Activated T-helper 1 cell treated with anti-CD3 and anti-CD28 coated beads, Interleukin-12 subunit alpha, Interleukin-12 subunit beta, Interleukin-2, Interleukin-4 antibody, amounts not matched to agents 30 ng/mL and 10 ng/mL and 1 ng/mL, durations not matched to agents 14 hours and 24 hours and 36 hours (primary cell): ENCODE measurements at regions of chr6 and their contacts with region 1.

Region 1: GRCh38 chr6:28737750-28738395 is 185.9 kb downstream of the TRIM27 start:
- DNase-seq: no peak
- H3K4me3 Mint-ChIP-seq: peak overlapping the region; percentile 12
- H3K27ac Mint-ChIP-seq: peak overlapping the region; percentile 54
- H3K4me1 Mint-ChIP-seq: peaks cover 10% of the 10 kb centered on the region
- H3K27me3 Mint-ChIP-seq: peaks cover 72% of the 10 kb centered on the region

Region 2: GRCh38 chr6:27679308-27679963 is 1058.4 kb before region 1 on chr6:
- intact Hi-C with region 1: loop called (anchors 2 kb)
- DNase-seq: no peak
- H3K4me3 Mint-ChIP-seq: peak overlapping the region; percentile 40
- H3K27ac Mint-ChIP-seq: peak overlapping the region; percentile 61
- H3K4me1 Mint-ChIP-seq: peaks cover 15% of the 10 kb centered on the region
- H3K27me3 Mint-ChIP-seq: peaks cover 74% of the 10 kb centered on the region

Region 3: DNA sequence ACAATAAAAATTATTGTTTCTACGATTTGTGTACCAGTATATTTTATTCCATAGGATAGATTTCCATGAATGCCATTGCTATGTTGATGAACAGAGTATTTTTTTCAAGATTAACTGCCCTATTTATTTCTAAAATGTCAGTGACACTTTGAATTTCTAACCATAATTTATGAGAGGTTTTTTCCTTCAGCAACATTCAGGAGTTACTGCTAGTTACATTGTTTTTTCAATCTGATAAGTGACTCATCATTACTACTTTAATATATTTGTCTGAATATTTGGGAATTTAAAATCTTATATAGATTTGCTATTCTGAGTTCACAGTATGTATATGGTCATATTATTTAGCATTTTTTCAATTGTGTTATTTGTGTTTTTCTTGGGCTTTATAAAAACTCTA is 786.8 kb before region 1 on chr6:
- intact Hi-C with region 1: no loop called
- DNase-seq: no peak
- H3K4me3 Mint-ChIP-seq: no peak overlapping the region
- H3K27ac Mint-ChIP-seq: no peak overlapping the region
- H3K4me1 Mint-ChIP-seq: no peaks in the 10 kb centered on the region
- H3K27me3 Mint-ChIP-seq: peaks cover 22% of the 10 kb centered on the region

Region 4: DNA sequence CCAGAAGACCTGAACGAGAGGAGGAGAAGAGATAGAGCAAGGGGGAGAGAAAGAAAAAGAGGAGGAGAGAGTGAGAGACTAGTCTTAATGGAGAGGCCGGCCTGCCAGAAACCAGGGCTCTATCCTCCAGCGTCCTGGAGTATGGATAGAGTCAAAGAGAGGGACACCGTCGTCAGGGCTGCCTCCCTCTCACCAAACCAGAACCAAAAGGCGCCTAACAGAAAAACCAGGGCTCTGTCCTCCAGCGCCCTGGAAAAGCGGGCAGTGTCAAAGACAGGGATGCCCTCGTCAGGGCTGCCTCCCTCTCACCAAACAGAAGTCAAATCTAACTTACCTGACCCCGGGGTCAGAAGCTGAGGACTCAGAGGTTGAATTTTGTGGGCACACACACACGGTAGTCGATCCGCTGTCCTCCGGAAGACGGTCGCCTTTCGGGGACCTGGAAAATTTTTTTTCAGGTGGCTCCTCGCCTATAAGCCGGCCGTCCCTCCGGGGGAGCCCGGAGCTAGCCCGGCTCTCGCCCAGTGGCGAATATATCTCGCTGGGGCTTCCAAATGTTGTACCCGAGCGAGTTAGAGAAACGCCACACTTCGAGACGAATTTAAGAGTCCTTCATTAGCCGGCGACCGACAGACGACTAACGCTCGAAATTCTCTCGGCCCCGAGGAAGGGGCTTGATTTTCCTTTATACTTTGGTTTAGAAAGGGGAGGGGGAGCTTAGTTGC is 37.7 kb after region 1 on chr6:
- intact Hi-C with region 1: loop called (anchors 2 kb)
- DNase-seq: no peak
- H3K4me3 Mint-ChIP-seq: no peak overlapping the region
- H3K27ac Mint-ChIP-seq: peak overlapping the region; percentile 83
- H3K4me1 Mint-ChIP-seq: peaks cover 9% of the 10 kb centered on the region
- H3K27me3 Mint-ChIP-seq: peaks cover 90% of the 10 kb centered on the region